Activated naive CD4-positive, alpha-beta T cell treated with anti-CD3 and anti-CD28 coated beads for 36 hours (primary cell): ENCODE measurements at regions of chr11 and their contacts with region 1.

Region 1: GRCh38 chr11:65779851-65780577 is 762 bp downstream of the AP5B1 start:
- DNase-seq: peak; percentile 88
- H3K4me3 Mint-ChIP-seq: peak overlapping the region; percentile 86
- H3K27ac Mint-ChIP-seq: peak overlapping the region; percentile 36
- H3K4me1 Mint-ChIP-seq: peaks cover 10% of the 10 kb centered on the region
- H3K27me3 Mint-ChIP-seq: no peaks in the 10 kb centered on the region

Region 2: GRCh38 chr11:65720237-65720934 is 59.6 kb before region 1 on chr11 and contains the start of gene RNASEH2C:
- CTCF ChIA-PET with region 1: interaction called, 12 read pairs
- intact Hi-C with region 1: no loop called
- DNase-seq: peak; percentile 88
- H3K4me3 Mint-ChIP-seq: peak within 1 kb of the TSS; percentile 95
- H3K27ac Mint-ChIP-seq: peak within 1 kb of the TSS; percentile 84
- H3K4me1 Mint-ChIP-seq: peaks cover 25% of the 10 kb centered on the region
- H3K27me3 Mint-ChIP-seq: no peaks in the 10 kb centered on the region
- total RNA-seq, gene RNASEH2C: 95.6 to 97.8 TPM

Region 3: GRCh38 chr11:65791691-65792213 is 11.7 kb after region 1 on chr11:
- CTCF ChIA-PET with region 1: interaction called, 33 read pairs
- intact Hi-C with region 1: no loop called
- DNase-seq: peak; percentile 80
- H3K4me3 Mint-ChIP-seq: no peak overlapping the region
- H3K27ac Mint-ChIP-seq: no peak overlapping the region
- H3K4me1 Mint-ChIP-seq: peaks cover 9% of the 10 kb centered on the region
- H3K27me3 Mint-ChIP-seq: peaks cover 29% of the 10 kb centered on the region

Region 4: DNA sequence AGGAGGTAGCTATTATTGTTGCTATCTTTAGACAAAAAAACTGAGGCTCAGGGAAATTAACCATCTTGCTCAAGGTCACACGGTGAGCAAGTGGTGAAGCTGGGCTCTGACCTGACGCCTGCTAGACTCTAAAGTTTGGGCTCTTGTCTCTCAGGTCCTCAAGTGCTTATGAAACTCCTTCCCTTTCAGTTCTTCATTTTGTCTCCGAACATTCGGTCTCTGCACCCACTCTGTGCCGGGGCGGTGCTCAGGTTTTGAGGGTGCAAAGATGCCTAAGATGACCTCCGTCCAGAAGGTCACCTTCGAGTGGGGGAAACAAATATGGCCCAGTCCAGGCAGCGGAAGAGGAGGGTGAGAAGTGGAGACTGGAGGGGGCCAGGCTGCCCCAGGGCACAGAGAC is 22.8 kb after region 1 on chr11:
- CTCF ChIA-PET with region 1: interaction called, 24 read pairs
- intact Hi-C with region 1: no loop called
- DNase-seq: no peak
- H3K4me3 Mint-ChIP-seq: no peak overlapping the region
- H3K27ac Mint-ChIP-seq: no peak overlapping the region
- H3K4me1 Mint-ChIP-seq: no peaks in the 10 kb centered on the region
- H3K27me3 Mint-ChIP-seq: peaks cover 9% of the 10 kb centered on the region

Region 5: GRCh38 chr11:65817835-65818742 is 38.1 kb after region 1 on chr11:
- CTCF ChIA-PET with region 1: interaction called, 158 read pairs
- intact Hi-C with region 1: loop called (anchors 1 kb)
- DNase-seq: peak; percentile 96
- H3K4me3 Mint-ChIP-seq: peak overlapping the region; percentile 72
- H3K27ac Mint-ChIP-seq: peak overlapping the region; percentile 50
- H3K4me1 Mint-ChIP-seq: peaks cover 6% of the 10 kb centered on the region
- H3K27me3 Mint-ChIP-seq: no peaks in the 10 kb centered on the region

Region 6: GRCh38 chr11:65850831-65851811 is 71.1 kb after region 1 on chr11:
- CTCF ChIA-PET with region 1: interaction called, 16 read pairs
- intact Hi-C with region 1: no loop called
- DNase-seq: peak; percentile 40
- H3K4me3 Mint-ChIP-seq: no peak overlapping the region
- H3K27ac Mint-ChIP-seq: no peak overlapping the region
- H3K4me1 Mint-ChIP-seq: peaks cover 25% of the 10 kb centered on the region
- H3K27me3 Mint-ChIP-seq: no peaks in the 10 kb centered on the region

Region 7: DNA sequence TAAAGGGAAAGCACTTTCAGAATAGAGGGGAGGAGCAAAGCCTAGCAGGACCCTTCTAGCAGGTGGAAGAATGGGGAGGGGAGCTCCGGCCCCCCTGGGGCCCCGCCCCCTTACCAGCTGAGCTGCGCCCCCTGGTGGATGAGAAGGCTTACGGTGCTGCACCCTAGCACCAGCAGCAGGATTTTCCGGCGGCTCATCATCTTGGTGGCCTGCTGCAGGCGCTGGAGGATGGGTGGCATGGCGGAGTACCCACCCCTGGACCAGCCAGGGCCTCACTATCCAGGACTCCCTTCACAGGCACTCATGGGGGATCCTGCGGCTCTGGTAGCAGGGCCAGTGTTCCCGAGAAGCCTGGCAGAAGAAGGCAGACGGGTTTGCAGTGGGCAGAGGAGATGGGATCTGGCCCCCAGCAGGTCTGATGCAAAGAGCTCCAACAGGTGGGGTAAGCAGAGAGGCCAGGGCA is 265.2 kb after region 1 on chr11:
- CTCF ChIA-PET with region 1: no interaction called
- intact Hi-C with region 1: no loop called
- DNase-seq: peak; percentile 88
- H3K4me3 Mint-ChIP-seq: peak overlapping the region; percentile 12
- H3K27ac Mint-ChIP-seq: peak overlapping the region; percentile 42
- H3K4me1 Mint-ChIP-seq: peaks cover 19% of the 10 kb centered on the region
- H3K27me3 Mint-ChIP-seq: peaks cover 7% of the 10 kb centered on the region